Dorsolateral prefrontal cortex (tissue), 120 donors: ENCODE measurements at regions of chr7 and their contacts with region 1.

Region 1: GRCh38 chr7:44847508-44847920 is 373 bp downstream of the H2AZ2 start:
- DNase-seq: peak; percentile 74 to 91 (median 84)
- H3K4me3 ChIP-seq: peak overlapping the region; percentile 56 to 97 (median 83)
- H3K27ac ChIP-seq: peak overlapping the region; percentile 76 to 98 (median 96)
- H3K27me3 ChIP-seq: no peaks in the 10 kb centered on the region
- CTCF ChIP-seq: peak; percentile 50 to 96 (median 85)

Region 2: GRCh38 chr7:44490351-44491200 is 356.9 kb before region 1 on chr7 and contains the start of gene NUDCD3:
- intact Hi-C with region 1: loop called in 1 of 2 experiments (anchors 5 kb)
- DNase-seq: peak; percentile 69 to 88 (median 83)
- H3K4me3 ChIP-seq: peak within 1 kb of the TSS; percentile 65 to 100 (median 96)
- H3K27ac ChIP-seq: peak within 1 kb of the TSS; percentile 82 to 100 (median 98)
- H3K27me3 ChIP-seq: peaks cover 0 to 4% (median 0%) of the 10 kb centered on the region in 45 donors
- CTCF ChIP-seq: peak in 47 of 56 donors; percentile 1 to 72 (median 45)
- total RNA-seq, gene NUDCD3: 157 to 398 (median 298) TPM

Region 3: DNA sequence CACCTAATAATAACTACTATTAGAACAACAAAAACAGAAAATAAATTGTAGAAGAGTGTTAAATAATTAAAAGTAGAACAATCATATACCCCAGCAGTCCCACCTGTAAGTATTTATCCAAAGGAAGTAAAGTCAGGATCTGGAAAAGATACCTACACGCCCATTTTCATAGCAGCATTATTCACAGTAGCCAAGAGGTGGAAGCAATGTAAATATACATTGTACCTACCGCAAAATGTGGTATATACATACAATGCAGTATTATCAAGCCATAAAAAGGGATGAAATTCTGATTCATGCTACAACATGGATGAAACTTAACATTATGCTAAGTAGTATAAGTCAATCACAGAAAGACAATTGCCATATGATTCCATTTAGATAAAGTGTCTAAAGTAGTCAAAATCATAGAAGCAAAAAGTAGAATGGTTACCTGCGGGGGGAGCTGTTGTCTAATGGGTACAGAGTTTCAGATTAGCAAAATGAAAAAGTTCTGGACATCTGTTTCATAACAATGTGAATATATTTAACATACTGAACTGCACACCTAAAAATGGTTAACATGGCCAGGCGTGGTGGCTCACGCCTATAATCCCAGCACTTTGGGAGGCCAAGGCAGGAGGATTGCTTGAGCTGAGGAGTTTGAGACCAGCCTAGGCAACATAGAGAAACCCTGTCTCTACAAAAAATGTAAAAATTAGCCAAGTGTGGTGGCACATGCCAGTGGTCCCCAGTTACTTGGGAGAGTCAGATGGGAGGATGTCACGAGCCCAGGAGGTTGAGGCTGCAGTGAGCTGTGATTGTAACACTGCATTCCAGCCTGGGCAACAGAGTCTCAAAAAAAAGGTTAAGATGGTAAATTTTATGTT is 259.4 kb before region 1 on chr7:
- intact Hi-C with region 1: loop called (anchors 2 kb)
- DNase-seq: peak in 2 of 10 donors; percentile 33 to 56
- H3K4me3 ChIP-seq: no peak overlapping the region
- H3K27ac ChIP-seq: no peak overlapping the region
- H3K27me3 ChIP-seq: no peaks in the 10 kb centered on the region
- CTCF ChIP-seq: peak; percentile 11 to 79 (median 64)

Region 4: DNA sequence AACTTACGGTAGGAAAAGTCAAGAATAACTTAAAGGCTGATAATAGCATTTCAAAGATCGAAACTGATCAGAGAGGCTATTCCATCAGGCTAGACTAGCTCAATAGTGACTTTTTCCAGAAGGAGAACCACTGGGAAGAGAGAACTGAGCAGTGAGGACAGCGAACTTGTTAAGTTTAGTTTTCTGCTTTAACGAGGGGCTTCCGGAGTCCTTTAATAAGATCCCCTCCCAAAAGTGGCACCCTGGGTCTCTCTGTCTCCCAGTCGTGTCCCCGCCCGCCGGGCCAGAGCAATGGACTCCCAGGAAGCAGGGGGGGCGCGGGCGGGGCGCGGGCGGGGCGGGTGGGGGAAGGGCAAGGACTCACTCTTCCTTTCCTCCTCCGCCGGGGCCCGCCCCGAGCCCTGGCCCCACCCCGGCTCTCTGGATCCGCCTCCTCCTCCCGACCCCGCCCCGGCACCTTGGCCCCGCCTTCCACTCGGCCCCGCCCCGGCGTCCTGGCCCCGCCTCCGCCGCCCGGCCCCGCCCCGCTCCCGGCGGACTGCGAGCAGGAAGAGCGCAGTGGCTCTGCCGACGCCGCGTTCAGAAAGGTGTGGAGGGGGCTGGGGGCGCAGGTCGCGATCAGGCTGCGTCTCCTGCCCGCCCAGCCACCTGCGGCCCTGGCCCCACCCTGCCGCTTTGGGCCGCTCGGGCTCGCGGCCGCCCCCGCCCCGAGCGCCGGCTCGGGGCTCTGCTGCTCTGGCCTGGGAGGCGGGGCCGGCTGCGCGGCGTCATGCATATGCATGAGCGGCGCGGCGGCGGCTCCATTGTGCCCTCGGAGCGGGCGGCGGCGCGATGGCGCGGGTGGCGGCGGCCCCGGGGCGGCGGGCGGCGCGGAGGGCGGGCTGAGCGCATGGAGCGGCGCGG is 99.2 kb before region 1 on chr7 and contains the start of gene ZMIZ2:
- intact Hi-C with region 1: loop called in 1 of 2 experiments (anchors 2 kb)
- DNase-seq: peak; percentile 82 to 97 (median 92)
- H3K4me3 ChIP-seq: peak within 1 kb of the TSS; percentile 70 to 97 (median 86)
- H3K27ac ChIP-seq: peak within 1 kb of the TSS; percentile 23 to 98 (median 92)
- H3K27me3 ChIP-seq: no peaks in the 10 kb centered on the region
- CTCF ChIP-seq: peak in 4 of 56 donors; percentile 9 to 31 (median 20)
- total RNA-seq, gene ZMIZ2: 106 to 231 (median 160) TPM

Region 5: GRCh38 chr7:44797329-44798251 is 49.9 kb before region 1 on chr7:
- intact Hi-C with region 1: loop called (anchors 1 to 2 kb)
- DNase-seq: peak; percentile 79 to 94 (median 90)
- H3K4me3 ChIP-seq: peak overlapping the region; percentile 61 to 99 (median 92)
- H3K27ac ChIP-seq: peak overlapping the region; percentile 85 to 100 (median 97)
- H3K27me3 ChIP-seq: no peaks in the 10 kb centered on the region
- CTCF ChIP-seq: peak in 55 of 56 donors; percentile 38 to 79 (median 60)

Region 6: DNA sequence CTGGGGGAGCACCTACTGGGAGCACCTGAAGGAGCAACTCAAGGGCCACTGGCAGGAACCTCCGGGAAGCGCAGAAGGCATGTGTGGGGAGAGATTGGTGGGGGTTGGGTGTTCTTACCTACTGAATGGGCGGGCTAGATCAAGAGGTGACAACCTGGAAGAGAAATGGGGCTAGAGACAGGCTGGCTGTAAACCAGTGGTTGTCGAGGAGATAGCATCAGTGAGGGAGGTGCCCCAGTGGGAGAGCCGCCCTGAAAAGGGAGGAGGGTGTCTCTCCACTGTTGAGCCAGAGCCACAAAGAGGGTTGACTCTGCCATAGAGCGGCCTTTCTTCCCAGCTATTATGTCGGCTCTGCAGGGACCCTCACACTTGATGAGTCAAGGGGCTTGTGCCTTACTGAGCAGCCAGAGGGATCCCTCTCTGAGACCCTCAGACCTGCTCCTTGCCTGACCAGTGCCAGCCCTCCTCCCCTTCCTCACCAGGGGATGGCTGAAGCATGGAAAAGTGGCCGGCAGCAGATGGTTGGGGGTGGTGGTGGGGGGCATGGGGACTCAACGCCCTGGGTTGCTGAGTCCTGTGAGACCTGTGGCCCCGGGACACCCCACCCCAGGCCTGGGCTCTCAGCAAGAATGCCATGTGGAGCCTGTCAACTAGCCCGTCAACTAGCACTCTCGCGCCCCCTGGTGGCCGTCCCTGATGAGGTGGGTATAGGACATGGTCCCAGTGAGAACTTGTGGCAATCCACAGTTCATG is 74.3 kb after region 1 on chr7:
- intact Hi-C with region 1: loop called in 1 of 2 experiments (anchors 2 kb)
- DNase-seq: peak; percentile 84 to 97 (median 92)
- H3K4me3 ChIP-seq: no peak overlapping the region
- H3K27ac ChIP-seq: no peak overlapping the region
- H3K27me3 ChIP-seq: peaks cover 0 to 2% (median 0%) of the 10 kb centered on the region in 45 donors
- CTCF ChIP-seq: peak; percentile 58 to 96 (median 90)

Region 7: GRCh38 chr7:46109437-46109836 is 1261.9 kb after region 1 on chr7:
- intact Hi-C with region 1: no loop called
- DNase-seq: no peak
- H3K4me3 ChIP-seq: no peak overlapping the region
- H3K27ac ChIP-seq: no peak overlapping the region
- H3K27me3 ChIP-seq: peaks cover 0 to 3% (median 0%) of the 10 kb centered on the region in 45 donors
- CTCF ChIP-seq: no peak